Aorta (tissue), 5 donors: ENCODE measurements at regions of chr17 and their contacts with region 1.

Region 1: GRCh38 chr17:18314731-18315561 is at the starts of genes SMCR8 and TOP3A:
- DNase-seq: peak; percentile 99
- ATAC-seq: peak; percentile 99
- H3K4me3 ChIP-seq: peak within 1 kb of the TSS; percentile 51 to 72
- H3K27ac ChIP-seq: peak within 1 kb of the TSS; percentile 12 to 71
- H3K4me1 ChIP-seq: no peaks in the 10 kb centered on the region
- H3K27me3 ChIP-seq: no peaks in the 10 kb centered on the region
- total RNA-seq, gene SMCR8: 10.8 to 15.4 TPM
- total RNA-seq, gene TOP3A: 27.8 to 37.8 TPM

Region 2: DNA sequence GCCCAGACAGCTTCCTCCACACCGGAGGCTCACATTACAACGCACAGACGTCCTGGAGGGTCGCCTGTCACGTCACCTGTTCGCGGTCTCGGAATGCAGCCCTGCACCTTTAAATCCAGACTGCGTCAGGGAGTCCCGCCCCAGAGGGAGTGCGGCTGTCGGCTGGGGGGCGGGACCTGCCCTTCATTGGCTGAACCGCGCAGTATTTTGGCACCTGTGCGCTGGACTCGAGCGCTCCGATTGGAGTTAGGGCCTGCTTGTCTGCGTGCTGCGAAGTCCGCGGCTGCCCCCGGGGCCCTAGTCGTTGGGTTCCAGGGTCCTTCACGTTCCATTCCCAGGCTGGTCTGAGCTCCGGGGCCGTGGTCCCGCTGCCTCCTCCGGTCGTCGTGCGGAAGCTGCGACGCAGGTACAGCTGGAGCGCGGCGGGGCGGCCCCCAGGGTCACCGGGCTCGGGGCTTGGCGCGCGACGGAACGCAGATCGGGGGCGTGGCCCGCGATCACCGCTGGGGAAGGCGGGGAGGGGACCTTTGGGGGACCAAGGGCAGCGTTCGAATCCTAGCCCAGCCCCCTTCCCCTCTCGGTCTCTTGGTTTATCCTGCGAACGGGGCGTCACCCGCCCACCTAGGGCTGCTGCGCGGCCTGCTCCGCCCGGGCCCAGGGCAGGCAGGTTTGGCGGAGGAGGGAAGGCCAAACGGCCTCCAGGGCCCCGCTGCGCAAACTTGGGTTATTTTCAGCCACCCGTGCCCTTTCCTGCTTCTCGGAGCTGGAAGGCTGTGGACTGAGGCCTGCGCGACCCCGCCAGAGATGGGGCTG is 54.4 kb before region 1 on chr17 and contains the start of gene MIEF2:
- intact Hi-C with region 1: loop called (anchors 2 to 5 kb)
- DNase-seq: peak; percentile 98
- ATAC-seq: peak; percentile 93
- H3K4me3 ChIP-seq: peak within 1 kb of the TSS; percentile 55 to 59
- H3K27ac ChIP-seq: peak within 1 kb of the TSS; percentile 23 to 72
- H3K4me1 ChIP-seq: peaks cover 0 to 5% of the 10 kb centered on the region in 2 donors
- H3K27me3 ChIP-seq: no peaks in the 10 kb centered on the region
- total RNA-seq, gene MIEF2: 11.1 to 13.1 TPM